ENCODE measurements at regions of chr20 and their contacts with region 1.

Region 1: DNA sequence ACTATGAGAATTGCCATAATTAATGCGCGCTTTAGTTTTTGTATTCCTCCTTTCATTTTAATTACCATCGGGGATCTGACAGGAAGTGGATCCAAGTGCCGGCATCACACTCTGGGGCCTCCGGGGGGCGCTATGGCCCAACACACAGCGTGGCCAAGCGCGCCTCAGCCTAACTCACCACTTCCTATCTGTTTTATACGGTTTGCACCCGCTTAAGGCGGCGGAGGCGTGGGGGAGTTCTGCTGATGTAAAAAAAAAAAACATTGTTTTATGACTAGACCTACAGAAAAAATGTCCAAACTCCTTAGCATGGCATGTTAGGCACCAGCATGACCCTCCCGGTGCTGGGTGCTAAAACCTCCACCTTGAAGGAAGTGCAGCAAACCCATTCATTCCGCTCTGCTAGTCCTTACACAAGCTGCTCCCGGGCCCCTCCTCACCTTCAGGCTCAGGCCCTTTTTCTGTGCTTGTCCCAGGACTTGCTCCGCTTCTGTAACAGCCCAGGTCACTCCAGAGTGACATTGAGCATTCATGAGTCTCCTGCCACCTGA is 4.5 kb upstream of the EBF4 start:
- DNase-seq: peak; percentile 83
- H3K4me3 Mint-ChIP-seq: peak overlapping the region; percentile 11
- H3K27ac Mint-ChIP-seq: peak overlapping the region; percentile 6
- H3K4me1 Mint-ChIP-seq: peaks cover 26% of the 10 kb centered on the region
- H3K27me3 Mint-ChIP-seq: peaks cover 42% of the 10 kb centered on the region

Region 2: GRCh38 chr20:2673453-2673852 is 14.7 kb before region 1 on chr20:
- CTCF ChIA-PET with region 1: interaction called, 19 read pairs
- POLR2A ChIA-PET with region 1: no interaction called
- DNase-seq: no peak
- H3K4me3 Mint-ChIP-seq: no peak overlapping the region
- H3K27ac Mint-ChIP-seq: no peak overlapping the region
- H3K4me1 Mint-ChIP-seq: no peaks in the 10 kb centered on the region
- H3K27me3 Mint-ChIP-seq: peaks cover 16% of the 10 kb centered on the region

Region 3: GRCh38 chr20:2742934-2743559 is 54.9 kb after region 1 on chr20:
- CTCF ChIA-PET with region 1: interaction called, 34 read pairs
- POLR2A ChIA-PET with region 1: interaction called, 4 read pairs
- DNase-seq: peak; percentile 78
- H3K4me3 Mint-ChIP-seq: no peak overlapping the region
- H3K27ac Mint-ChIP-seq: peak overlapping the region; percentile 65
- H3K4me1 Mint-ChIP-seq: peaks cover 32% of the 10 kb centered on the region
- H3K27me3 Mint-ChIP-seq: peaks cover 23% of the 10 kb centered on the region

Region 4: GRCh38 chr20:2752567-2753460 is 64.7 kb after region 1 on chr20:
- CTCF ChIA-PET with region 1: interaction called, 12 read pairs
- POLR2A ChIA-PET with region 1: no interaction called
- DNase-seq: peak; percentile 42
- H3K4me3 Mint-ChIP-seq: peak overlapping the region; percentile 71
- H3K27ac Mint-ChIP-seq: peak overlapping the region; percentile 62
- H3K4me1 Mint-ChIP-seq: peaks cover 19% of the 10 kb centered on the region
- H3K27me3 Mint-ChIP-seq: peaks cover 60% of the 10 kb centered on the region

Region 5: GRCh38 chr20:2814587-2815051 is 126.5 kb after region 1 on chr20 and contains the start of gene C20orf141:
- CTCF ChIA-PET with region 1: no interaction called
- POLR2A ChIA-PET with region 1: no interaction called
- DNase-seq: no peak
- H3K4me3 Mint-ChIP-seq: no peak within 1 kb of the TSS
- H3K27ac Mint-ChIP-seq: no peak within 1 kb of the TSS
- H3K4me1 Mint-ChIP-seq: no peaks in the 10 kb centered on the region
- H3K27me3 Mint-ChIP-seq: peaks cover 49% of the 10 kb centered on the region
- total RNA-seq, gene C20orf141: not detected